ENCODE measurements at regions of chr9 and their contacts with region 1.

Region 1: DNA sequence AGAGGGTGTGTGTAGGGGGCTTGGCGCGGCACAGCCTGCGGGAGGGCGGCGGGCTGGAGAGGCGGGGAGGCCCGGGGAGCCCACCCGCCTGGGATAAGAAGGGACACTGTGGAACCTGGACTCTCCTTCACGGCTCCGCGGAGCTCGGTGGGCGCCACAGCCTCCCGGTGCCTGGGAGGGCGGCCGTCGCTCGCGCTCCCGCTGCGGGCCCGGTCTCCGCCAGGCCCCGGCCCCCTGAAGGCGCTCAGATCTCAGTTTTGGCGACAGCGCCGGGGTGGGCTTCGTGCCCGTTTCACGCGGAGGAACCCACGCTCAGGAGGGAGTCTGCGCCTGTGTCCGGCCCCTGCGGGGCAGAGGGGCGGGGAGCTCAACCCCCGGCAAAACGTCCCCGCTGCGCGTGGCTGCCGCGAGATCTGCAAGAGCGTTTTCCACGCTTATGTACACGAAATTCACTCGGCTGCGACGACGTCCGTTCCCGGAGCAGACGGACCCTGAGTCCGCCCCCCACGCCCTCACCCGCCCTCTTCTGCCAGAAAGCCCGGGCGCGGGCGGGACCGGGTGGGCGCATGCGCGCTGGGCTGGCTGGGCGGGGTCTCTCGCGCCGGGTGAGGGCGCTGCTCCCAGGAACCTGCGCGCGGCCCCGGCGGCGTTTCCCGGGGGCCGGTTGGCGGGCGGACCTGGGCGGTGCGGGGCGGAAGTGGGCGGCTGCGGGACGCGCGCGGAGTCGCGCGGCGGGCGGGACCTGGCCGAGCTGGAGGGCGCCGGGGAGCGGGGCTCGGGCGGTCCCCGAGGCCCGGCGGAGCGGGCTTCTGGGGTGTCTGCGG is at the start of gene NELFB:
- DNase-seq: peak; percentile 100
- H3K27ac ChIP-seq: peak within 1 kb of the TSS; percentile 84
- CTCF ChIP-seq: no peak

Region 2: GRCh38 chr9:137162505-137163100 is 92.2 kb before region 1 on chr9:
- CTCF ChIA-PET with region 1: no interaction called
- POLR2A ChIA-PET with region 1: no interaction called
- DNase-seq: no peak
- H3K27ac ChIP-seq: no peak overlapping the region
- CTCF ChIP-seq: peak; percentile 51; the same call in 1 of the 2 replicates

Region 3: DNA sequence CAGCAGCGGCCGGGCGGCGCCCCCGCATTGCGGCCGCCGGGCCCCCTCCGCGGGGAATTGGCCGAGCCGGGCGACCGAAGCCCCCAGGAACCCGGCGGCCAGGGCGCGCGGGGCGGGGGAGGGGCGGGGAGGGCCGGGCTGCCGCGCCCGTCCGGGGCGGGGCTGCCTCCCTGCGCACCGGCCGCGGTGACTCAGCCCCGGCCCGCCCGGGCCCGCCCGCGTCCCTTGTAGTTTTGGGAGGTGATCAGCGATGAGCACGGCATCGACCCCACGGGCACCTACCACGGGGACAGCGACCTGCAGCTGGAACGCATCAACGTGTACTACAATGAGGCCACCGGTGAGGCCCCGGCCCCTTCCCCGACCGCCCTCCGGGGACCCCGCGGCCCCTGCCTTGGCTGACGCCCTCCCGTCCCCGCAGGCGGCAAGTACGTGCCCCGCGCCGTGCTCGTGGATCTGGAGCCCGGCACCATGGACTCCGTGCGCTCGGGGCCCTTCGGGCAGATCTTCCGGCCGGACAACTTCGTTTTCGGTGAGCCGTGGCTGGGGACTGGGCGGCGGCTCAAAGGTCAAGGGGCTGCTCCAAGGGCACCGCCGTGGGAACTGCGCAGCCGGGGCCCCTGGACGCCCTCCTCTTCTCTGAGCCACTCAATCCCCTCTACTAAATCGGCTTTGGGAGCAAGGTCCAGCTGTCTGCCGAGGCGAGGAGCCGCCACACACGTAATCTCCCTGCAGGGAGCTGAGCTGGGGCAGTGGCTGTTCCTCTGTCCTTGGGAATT is 13.2 kb before region 1 on chr9:
- CTCF ChIA-PET with region 1: interaction called, 15 read pairs
- POLR2A ChIA-PET with region 1: interaction called, 9 read pairs
- DNase-seq: peak; percentile 89
- H3K27ac ChIP-seq: peak overlapping the region; percentile 100
- CTCF ChIP-seq: no peak

Measured in RWPE1 (cell line).